ENCODE measurements at regions of chr11 and their contacts with region 1.

Region 1: GRCh38 chr11:19951558-19952115 is 208.6 kb downstream of the DBX1 start:
- ATAC-seq: peak; percentile 12 to 45 (median 40)
- H3K4me3 ChIP-seq: no peak overlapping the region
- H3K27ac ChIP-seq: no peak overlapping the region
- H3K4me1 ChIP-seq: peaks cover 9% of the 10 kb centered on the region in 2 donors

Region 2: GRCh38 chr11:19753451-19754106 is 198.1 kb before region 1 on chr11:
- in situ Hi-C with region 1: no loop called
- ATAC-seq: peak in 3 of 8 experiments; percentile 58 to 72 (median 61)
- H3K4me3 ChIP-seq: no peak overlapping the region
- H3K27ac ChIP-seq: no peak overlapping the region
- H3K4me1 ChIP-seq: peaks cover 6 to 8% of the 10 kb centered on the region in 2 donors

Region 3: DNA sequence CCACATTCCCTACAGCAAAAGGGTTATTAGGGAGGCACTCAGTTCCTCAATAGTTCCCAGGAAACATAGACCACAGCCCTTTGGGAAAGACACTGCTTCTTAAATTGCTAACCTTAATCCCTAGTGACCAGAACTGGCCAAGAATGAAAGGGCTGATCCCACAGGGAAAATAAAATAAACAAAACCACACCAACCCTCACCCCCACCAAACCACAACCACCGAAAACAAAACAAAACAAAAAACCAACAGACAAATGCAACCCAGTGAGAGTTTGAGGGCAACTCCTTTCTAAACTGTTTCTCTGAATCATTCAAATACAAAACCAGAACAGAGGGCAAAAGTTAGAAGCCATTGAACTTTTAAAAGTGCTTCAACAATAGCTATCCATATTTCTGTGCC is 181.8 kb before region 1 on chr11:
- in situ Hi-C with region 1: no loop called
- ATAC-seq: peak in 1 of 8 experiments; percentile 30
- H3K4me3 ChIP-seq: no peak overlapping the region
- H3K27ac ChIP-seq: no peak overlapping the region
- H3K4me1 ChIP-seq: peaks cover 21 to 29% of the 10 kb centered on the region in 2 donors

Region 4: GRCh38 chr11:20110908-20111669 is 159.5 kb after region 1 on chr11:
- in situ Hi-C with region 1: loop called in 3 of 9 experiments (anchors 10 to 25 kb)
- ATAC-seq: peak; percentile 17 to 64 (median 50)
- H3K4me3 ChIP-seq: no peak overlapping the region
- H3K27ac ChIP-seq: no peak overlapping the region
- H3K4me1 ChIP-seq: no peaks in the 10 kb centered on the region

Region 5: DNA sequence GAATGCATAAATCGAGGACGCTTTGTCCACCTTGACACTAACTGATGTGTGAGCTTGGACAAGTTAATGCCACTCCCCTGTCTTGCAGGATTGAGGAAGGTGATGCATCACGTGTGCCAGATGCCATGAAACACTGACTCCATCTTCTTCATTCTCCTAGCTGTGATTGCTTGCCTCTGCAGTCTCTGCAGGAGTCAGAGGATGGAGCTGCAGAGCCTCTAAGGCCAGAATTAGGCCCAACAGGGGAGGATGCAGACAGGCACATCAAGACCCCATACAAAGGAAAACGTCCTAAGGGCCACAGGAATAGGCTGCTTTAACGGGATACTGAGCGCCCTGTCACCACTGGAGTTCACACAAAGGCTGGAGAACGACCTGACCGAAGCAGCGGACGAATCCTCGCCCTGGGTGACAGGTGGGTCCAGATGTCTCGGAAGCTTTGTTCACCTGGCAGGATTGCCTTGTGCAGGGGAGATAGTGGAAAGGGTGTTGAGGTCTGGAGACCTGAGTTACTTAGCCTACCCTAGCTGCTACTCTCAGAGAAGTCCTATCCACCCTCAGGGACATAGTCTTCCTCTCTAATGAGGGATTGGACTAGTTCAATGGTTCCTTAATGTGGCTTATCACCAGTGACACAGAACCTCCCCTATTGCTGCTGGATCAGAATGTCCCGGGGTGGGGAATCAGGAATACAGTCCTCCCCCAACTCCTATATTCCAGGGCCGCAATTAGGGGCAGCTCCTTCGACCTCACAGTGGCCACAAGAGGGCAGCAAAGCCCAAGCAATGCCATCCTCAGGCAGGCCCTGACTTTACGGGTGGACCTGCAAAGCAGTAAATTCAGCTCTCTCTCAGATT is 176.3 kb after region 1 on chr11:
- in situ Hi-C with region 1: loop called in 6 of 9 experiments (anchors 10 to 25 kb)
- ATAC-seq: peak; percentile 67 to 90 (median 86)
- H3K4me3 ChIP-seq: no peak overlapping the region
- H3K27ac ChIP-seq: no peak overlapping the region
- H3K4me1 ChIP-seq: no peaks in the 10 kb centered on the region

Region 6: GRCh38 chr11:20658135-20658534 is 706.5 kb after region 1 on chr11:
- in situ Hi-C with region 1: no loop called
- ATAC-seq: no peak
- H3K4me3 ChIP-seq: no peak overlapping the region
- H3K27ac ChIP-seq: no peak overlapping the region
- H3K4me1 ChIP-seq: peaks cover 0 to under 1% of the 10 kb centered on the region in 2 donors

Measured in motor neuron (in vitro differentiated cells).